ENCODE measurements at regions of chr22 and their contacts with region 1.

Region 1: GRCh38 chr22:35914665-35915476 is 113.8 kb downstream of the RBFOX2 start:
- DNase-seq: peak; percentile 70 to 88 (median 83)
- H3K4me3 ChIP-seq: peak overlapping the region in 2 of 4 donors; percentile 22 to 59
- H3K27ac ChIP-seq: peak overlapping the region in 3 of 5 donors; percentile 67 to 88 (median 77)
- H3K4me1 ChIP-seq: peaks cover 34 to 57% of the 10 kb centered on the region in 2 donors
- H3K27me3 ChIP-seq: no peaks in the 10 kb centered on the region
- CTCF ChIP-seq: no peak
- POLR2A ChIP-seq: peak in 1 of 2 donors; percentile 53

Region 2: GRCh38 chr22:35777335-35777975 is 137.4 kb before region 1 on chr22:
- intact Hi-C with region 1: loop called in 1 of 2 experiments (anchors 10 kb)
- DNase-seq: no peak
- H3K4me3 ChIP-seq: no peak overlapping the region
- H3K27ac ChIP-seq: no peak overlapping the region
- H3K4me1 ChIP-seq: no peaks in the 10 kb centered on the region
- H3K27me3 ChIP-seq: no peaks in the 10 kb centered on the region
- CTCF ChIP-seq: no peak
- POLR2A ChIP-seq: no peak

Region 3: DNA sequence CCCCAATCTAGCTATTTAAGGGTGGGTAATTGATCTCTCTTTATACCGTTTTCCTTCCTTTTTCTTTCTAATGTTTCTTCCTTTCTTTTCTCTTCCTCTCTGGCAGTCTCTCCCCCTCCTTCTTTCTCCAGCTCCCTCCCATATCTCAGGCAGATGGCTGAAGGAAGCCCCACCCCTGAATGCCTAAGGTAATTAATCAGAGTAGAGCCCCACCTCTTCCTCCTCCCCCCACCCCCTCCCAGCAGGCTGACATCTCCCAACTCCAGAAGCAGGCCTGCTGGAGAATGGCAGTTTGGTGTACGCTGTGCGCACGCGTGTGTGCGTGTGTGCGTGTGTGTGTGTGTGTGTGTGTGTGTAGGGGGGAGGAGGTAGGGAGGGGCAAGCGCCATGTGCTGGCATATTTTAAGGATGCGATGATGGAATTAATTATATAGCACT is 74.5 kb before region 1 on chr22:
- intact Hi-C with region 1: loop called (anchors 10 kb)
- DNase-seq: peak; percentile 90 to 96 (median 91)
- H3K4me3 ChIP-seq: peak overlapping the region in 2 of 4 donors; percentile 27 to 51
- H3K27ac ChIP-seq: peak overlapping the region in 3 of 5 donors; percentile 45 to 64 (median 56)
- H3K4me1 ChIP-seq: peaks cover 18 to 50% of the 10 kb centered on the region in 2 donors
- H3K27me3 ChIP-seq: no peaks in the 10 kb centered on the region
- CTCF ChIP-seq: peak in 2 of 6 experiments; percentile 17 to 23
- POLR2A ChIP-seq: peak; percentile 21 to 80

Region 4: DNA sequence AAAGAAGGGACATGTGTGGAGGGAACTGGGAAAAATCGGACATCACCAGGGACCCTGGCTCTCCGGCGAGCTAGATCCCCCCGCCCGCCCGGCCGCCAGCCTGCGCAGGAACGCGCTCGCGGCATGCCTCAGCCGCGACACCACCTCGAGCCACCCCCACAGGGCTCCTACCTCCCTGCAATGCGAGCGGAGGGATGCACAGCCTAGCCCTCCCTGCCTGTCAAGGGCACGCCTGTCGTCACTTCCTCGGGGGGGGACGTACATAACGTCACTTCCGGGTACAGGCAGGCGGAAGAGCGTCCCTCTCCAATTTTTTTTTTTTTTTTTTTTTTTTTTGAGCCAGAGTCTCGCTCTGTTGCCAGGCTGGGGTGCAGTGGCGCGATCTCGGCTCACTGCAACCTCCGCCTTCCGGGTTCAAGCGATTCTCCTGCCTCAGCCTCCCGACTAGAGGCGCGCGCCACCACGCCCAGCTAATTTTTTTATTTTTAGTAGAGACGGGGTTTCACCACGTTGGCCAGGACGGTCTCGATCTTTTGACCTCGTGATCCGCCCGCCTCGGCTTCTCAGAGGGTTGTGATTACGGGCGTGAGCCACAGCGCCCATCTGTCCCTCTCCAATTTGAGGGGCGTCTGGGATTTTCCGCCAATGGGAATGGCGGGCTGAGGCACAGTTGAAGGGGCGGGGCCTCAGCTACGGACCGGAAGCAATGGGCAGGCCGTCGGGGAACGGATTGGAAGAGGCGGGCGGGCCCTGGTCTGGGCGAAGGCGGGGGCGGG is 566.7 kb after region 1 on chr22 and contains the start of gene TXN2:
- intact Hi-C with region 1: no loop called
- DNase-seq: peak; percentile 96 to 99 (median 98)
- H3K4me3 ChIP-seq: peak within 1 kb of the TSS; percentile 16 to 60 (median 45)
- H3K27ac ChIP-seq: peak within 1 kb of the TSS; percentile 97 to 100 (median 99)
- H3K4me1 ChIP-seq: peaks cover 28 to 39% of the 10 kb centered on the region in 2 donors
- H3K27me3 ChIP-seq: no peaks in the 10 kb centered on the region
- CTCF ChIP-seq: peak in 1 of 6 experiments; percentile 1
- POLR2A ChIP-seq: peak; percentile 85 to 97
- total RNA-seq, gene TXN2: 160 to 245 (median 189) TPM

Measured in adrenal gland (tissue), 19 donors.